ENCODE measurements at regions of chr11 and their contacts with region 1.

Region 1: DNA sequence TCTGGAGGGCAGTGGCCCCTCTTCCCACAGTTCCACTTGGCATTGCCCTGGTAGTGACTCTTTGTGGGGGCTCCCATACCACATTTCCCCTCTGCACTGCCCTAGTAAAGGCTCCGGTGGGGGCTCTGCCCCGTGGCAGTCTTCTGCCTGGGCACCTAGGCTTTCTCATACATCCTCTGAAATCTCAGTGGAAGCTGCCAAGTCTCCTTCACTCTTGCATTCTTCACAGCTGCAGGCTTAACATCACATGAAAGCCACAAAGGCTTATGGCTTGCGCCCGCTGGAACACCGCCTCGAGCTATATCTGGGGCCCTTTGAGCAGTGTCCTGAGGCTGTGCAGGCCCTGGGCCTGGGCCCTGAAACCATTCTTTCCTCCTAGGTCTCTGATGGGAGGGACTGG is 25.3 kb downstream of the PLEKHB1 start:
- DNase-seq: no peak
- H3K4me3 ChIP-seq: no peak overlapping the region
- H3K27ac ChIP-seq: no peak overlapping the region
- H3K4me1 ChIP-seq: no peaks in the 10 kb centered on the region
- H3K27me3 ChIP-seq: no peaks in the 10 kb centered on the region
- CTCF ChIP-seq: no peak

Region 2: GRCh38 chr11:73414977-73415651 is 256.6 kb before region 1 on chr11:
- CTCF ChIA-PET with region 1: no interaction called
- POLR2A ChIA-PET with region 1: interaction called, 19 read pairs
- intact Hi-C with region 1: no loop called
- DNase-seq: no peak
- H3K4me3 ChIP-seq: no peak overlapping the region
- H3K27ac ChIP-seq: no peak overlapping the region
- H3K4me1 ChIP-seq: peaks cover 19% of the 10 kb centered on the region
- H3K27me3 ChIP-seq: no peaks in the 10 kb centered on the region
- CTCF ChIP-seq: no peak

Region 3: DNA sequence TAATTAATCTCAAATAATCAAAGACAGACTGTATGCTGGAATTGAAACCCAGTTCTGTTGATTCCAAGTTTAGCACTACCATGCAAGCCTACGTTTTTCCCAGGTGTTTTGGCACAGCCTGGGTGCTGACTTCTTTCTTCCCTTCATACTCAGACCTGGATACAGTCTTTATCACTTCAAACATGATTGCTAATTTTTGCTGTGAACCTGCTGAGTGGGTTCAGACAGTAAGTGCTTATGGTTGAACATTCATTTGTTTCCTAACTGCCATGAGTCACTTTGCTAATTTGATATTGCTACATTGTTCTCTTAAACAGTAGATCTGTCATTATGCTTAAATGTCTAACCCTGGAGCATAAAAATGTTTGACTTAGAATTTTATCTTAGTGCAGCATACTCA is 217.3 kb after region 1 on chr11:
- CTCF ChIA-PET with region 1: interaction called, 14 read pairs
- POLR2A ChIA-PET with region 1: no interaction called
- intact Hi-C with region 1: no loop called
- DNase-seq: no peak
- H3K4me3 ChIP-seq: no peak overlapping the region
- H3K27ac ChIP-seq: no peak overlapping the region
- H3K4me1 ChIP-seq: peaks cover 7% of the 10 kb centered on the region
- H3K27me3 ChIP-seq: no peaks in the 10 kb centered on the region
- CTCF ChIP-seq: no peak

Region 4: GRCh38 chr11:74004759-74005615 is 333.3 kb after region 1 on chr11:
- CTCF ChIA-PET with region 1: no interaction called
- POLR2A ChIA-PET with region 1: no interaction called
- intact Hi-C with region 1: no loop called
- DNase-seq: no peak
- H3K4me3 ChIP-seq: no peak overlapping the region
- H3K27ac ChIP-seq: no peak overlapping the region
- H3K4me1 ChIP-seq: peaks cover 6% of the 10 kb centered on the region
- H3K27me3 ChIP-seq: no peaks in the 10 kb centered on the region
- CTCF ChIP-seq: no peak